HCT116 (cell line): ENCODE measurements at regions of chr19 and their contacts with region 1.

Region 1: DNA sequence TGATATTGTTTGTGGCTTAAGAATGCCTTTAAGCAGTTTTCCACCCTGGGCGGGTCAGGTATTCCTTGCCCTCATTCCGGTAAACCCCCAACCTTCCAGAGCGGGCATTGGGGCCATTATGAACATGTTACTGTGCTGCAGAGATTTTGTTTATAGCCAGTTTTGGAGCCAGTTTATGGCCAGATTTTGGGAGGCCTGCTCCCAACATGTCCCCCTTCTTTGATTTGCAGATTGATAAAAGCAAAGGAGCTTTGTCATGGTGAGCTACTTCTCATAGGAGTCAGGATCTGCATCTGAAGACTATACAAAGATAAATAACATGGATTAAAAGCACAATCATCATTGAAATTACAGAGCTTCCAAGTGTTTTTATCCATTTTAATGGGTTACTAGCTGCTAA is 36.9 kb upstream of the ZNF562 start:
- DNase-seq: no peak
- ATAC-seq: no peak
- H3K4me3 ChIP-seq: no peak overlapping the region
- H3K27ac ChIP-seq: no peak overlapping the region
- H3K4me1 ChIP-seq: no peaks in the 10 kb centered on the region
- H3K27me3 ChIP-seq: no peaks in the 10 kb centered on the region
- CTCF ChIP-seq: no peak
- POLR2A ChIP-seq: no peak
- RAD21 ChIP-seq: no peak

Region 2: DNA sequence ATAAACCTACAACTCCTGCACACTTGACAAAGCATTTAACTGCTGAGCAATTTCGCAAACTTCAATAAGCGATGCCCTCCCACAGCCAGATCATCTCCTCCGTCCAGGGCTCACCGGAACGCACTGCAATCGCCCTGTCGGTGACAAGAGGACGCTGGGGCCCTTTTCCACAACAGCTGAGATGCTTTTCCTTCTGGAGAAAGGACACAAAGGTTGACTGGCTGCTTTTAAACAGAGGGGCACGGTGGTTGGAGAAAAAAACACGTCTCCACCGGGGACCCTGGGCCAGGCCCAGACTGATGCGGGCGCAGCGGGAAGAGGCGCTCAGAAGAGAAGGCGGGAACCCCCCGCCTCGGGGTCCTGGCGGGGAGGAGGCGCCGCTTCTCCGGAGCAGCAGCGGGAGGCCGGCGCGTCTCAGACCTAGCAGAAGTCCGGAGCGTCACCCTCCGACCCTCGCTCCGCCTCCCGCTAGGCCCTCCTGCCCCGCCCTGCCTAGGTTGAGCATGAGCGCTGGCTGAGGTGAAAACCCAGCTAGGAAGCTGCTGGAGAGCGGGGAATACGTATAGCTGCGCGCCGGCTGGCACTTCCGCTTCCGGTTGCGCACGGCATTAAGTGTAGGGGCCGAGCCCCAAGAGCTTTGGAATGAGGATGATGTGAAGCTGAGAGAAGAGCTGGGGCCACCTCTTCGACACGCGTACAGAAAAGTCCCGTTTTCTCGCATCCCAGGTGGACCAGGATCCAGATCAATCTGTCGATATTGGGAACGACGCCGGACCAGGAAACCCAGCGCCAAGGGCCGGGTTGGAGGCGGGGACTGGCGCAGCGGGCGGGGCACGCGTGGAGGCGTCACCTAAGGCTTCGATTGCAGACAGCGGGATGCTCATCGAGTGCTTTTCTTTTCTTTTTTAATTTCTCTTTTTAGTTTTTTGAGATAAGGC is 56.6 kb after region 1 on chr19 and contains the start of gene ZNF846:
- CTCF ChIA-PET with region 1: no interaction called
- POLR2A ChIA-PET with region 1: no interaction called
- RAD21 ChIA-PET with region 1: no interaction called
- intact Hi-C with region 1: loop called (anchors 10 kb)
- DNase-seq: no peak
- ATAC-seq: no peak
- H3K4me3 ChIP-seq: no peak within 1 kb of the TSS
- H3K27ac ChIP-seq: no peak within 1 kb of the TSS
- H3K4me1 ChIP-seq: no peaks in the 10 kb centered on the region
- H3K27me3 ChIP-seq: no peaks in the 10 kb centered on the region
- CTCF ChIP-seq: no peak
- POLR2A ChIP-seq: no peak
- RAD21 ChIP-seq: no peak
- total RNA-seq, gene ZNF846: 1.2 TPM